ENCODE measurements at regions of chr5 and their contacts with region 1.

Region 1: DNA sequence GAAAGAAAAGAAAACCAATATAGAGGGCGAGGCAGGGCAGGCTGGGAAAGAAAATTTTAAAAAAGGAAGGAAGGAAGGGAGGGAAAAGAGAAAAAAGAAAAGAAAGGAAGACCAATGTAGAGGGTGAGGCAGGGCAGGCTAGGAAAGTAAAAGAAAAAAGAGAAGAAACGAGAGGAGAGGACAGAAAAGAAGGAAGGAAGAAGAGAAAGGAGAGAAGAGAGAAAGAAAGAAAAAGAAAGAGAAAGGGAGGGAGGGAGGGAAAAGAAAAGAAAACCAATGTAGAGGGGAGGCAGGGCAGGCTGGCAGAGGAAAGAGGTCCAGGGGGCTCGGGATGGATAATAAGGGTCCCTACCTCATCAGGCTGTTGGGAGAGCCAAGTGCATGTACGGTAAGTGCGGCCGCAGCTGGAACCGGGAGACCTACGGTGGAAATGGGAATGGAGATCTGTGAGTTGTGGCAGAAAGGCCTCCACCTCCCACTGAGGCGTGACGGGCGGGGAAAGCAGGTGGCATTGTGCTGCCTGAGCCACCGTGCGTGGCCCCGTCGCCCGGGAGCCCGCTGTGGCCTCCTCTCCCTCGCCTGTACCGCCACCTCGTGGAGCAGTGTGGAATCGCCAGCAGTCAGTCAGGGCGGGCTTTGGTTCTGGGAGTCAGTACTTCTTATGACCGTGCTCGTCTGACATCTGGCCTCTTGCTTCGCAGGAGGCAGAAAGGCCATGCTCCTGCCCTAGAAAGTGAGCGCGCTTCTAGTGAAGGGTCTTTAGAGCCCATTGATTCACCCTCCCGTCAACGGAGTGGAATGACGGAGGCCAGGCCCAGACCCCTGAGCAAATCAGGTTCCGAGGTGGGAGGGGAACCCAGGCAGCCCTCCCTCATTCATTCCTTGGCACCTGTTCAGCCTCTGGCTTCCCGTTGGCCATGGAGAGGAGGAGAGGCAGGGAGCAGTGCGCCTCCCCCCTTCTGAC is 10.4 kb upstream of the NHP2 start:
- DNase-seq: peak; percentile 15 to 90
- H3K4me3 ChIP-seq: peak overlapping the region; percentile 8 to 23
- H3K27ac ChIP-seq: no peak overlapping the region
- H3K4me1 ChIP-seq: peaks cover 0 to 2% of the 10 kb centered on the region in 2 donors
- H3K27me3 ChIP-seq: no peaks in the 10 kb centered on the region
- CTCF ChIP-seq: peak; percentile 93 to 100 (median 98)

Region 2: GRCh38 chr5:178075840-178076548 is 88.1 kb before region 1 on chr5:
- intact Hi-C with region 1: loop called (anchors 1 kb)
- DNase-seq: no peak
- H3K4me3 ChIP-seq: no peak overlapping the region
- H3K27ac ChIP-seq: no peak overlapping the region
- H3K4me1 ChIP-seq: no peaks in the 10 kb centered on the region
- H3K27me3 ChIP-seq: no peaks in the 10 kb centered on the region
- CTCF ChIP-seq: peak; percentile 44 to 64 (median 56)